ENCODE measurements at regions of chr5 and their contacts with region 1.

Region 1: GRCh38 chr5:140351609-140352334 is 5.4 kb upstream of the HBEGF start:
- DNase-seq: peak; percentile 70 to 81 (median 77)
- H3K4me3 ChIP-seq: no peak overlapping the region
- H3K4me3 Mint-ChIP-seq: peak overlapping the region in 3 of 8 donors; percentile 25 to 53 (median 49)
- H3K27ac ChIP-seq: no peak overlapping the region
- H3K27ac Mint-ChIP-seq: peak overlapping the region in 2 of 7 donors; percentile 19 to 61
- H3K4me1 ChIP-seq: peaks cover 11% of the 10 kb centered on the region
- H3K4me1 Mint-ChIP-seq: peaks cover 8 to 16% (median 11%) of the 10 kb centered on the region in 4 donors
- H3K27me3 ChIP-seq: no peaks in the 10 kb centered on the region
- H3K27me3 Mint-ChIP-seq: peaks cover 1 to 5% of the 10 kb centered on the region in 2 donors

Region 2: GRCh38 chr5:140244525-140245025 is 107.2 kb before region 1 on chr5:
- CTCF ChIA-PET with region 1: interaction called, 518 read pairs
- POLR2A ChIA-PET with region 1: interaction called, 4 read pairs
- intact Hi-C with region 1: loop called (anchors 1 kb)
- DNase-seq: peak; percentile 67 to 82 (median 78)
- H3K4me3 ChIP-seq: no peak overlapping the region
- H3K4me3 Mint-ChIP-seq: peak overlapping the region in 3 of 8 donors; percentile 36 to 57 (median 54)
- H3K27ac ChIP-seq: no peak overlapping the region
- H3K27ac Mint-ChIP-seq: peak overlapping the region in 6 of 7 donors; percentile 62 to 88 (median 68)
- H3K4me1 ChIP-seq: peaks cover 17% of the 10 kb centered on the region
- H3K4me1 Mint-ChIP-seq: peaks cover 12 to 23% (median 15%) of the 10 kb centered on the region in 4 donors
- H3K27me3 ChIP-seq: no peaks in the 10 kb centered on the region
- H3K27me3 Mint-ChIP-seq: no peaks in the 10 kb centered on the region

Region 3: GRCh38 chr5:140261403-140262171 is 90.2 kb before region 1 on chr5:
- CTCF ChIA-PET with region 1: interaction called, 22 read pairs
- POLR2A ChIA-PET with region 1: interaction called, 4 read pairs
- intact Hi-C with region 1: no loop called
- DNase-seq: peak; percentile 33 to 70 (median 51)
- H3K4me3 ChIP-seq: no peak overlapping the region
- H3K4me3 Mint-ChIP-seq: peak overlapping the region in 7 of 8 donors; percentile 28 to 74 (median 60)
- H3K27ac ChIP-seq: peak overlapping the region; percentile 38
- H3K27ac Mint-ChIP-seq: peak overlapping the region; percentile 78 to 97 (median 83)
- H3K4me1 ChIP-seq: peaks cover 70% of the 10 kb centered on the region
- H3K4me1 Mint-ChIP-seq: peaks cover 52 to 73% (median 58%) of the 10 kb centered on the region in 4 donors
- H3K27me3 ChIP-seq: no peaks in the 10 kb centered on the region
- H3K27me3 Mint-ChIP-seq: no peaks in the 10 kb centered on the region

Region 4: GRCh38 chr5:140327589-140327988 is 24.2 kb before region 1 on chr5:
- CTCF ChIA-PET with region 1: interaction called, 12 read pairs
- POLR2A ChIA-PET with region 1: no interaction called
- intact Hi-C with region 1: no loop called
- DNase-seq: no peak
- H3K4me3 ChIP-seq: no peak overlapping the region
- H3K4me3 Mint-ChIP-seq: no peak overlapping the region
- H3K27ac ChIP-seq: no peak overlapping the region
- H3K27ac Mint-ChIP-seq: no peak overlapping the region
- H3K4me1 ChIP-seq: no peaks in the 10 kb centered on the region
- H3K4me1 Mint-ChIP-seq: no peaks in the 10 kb centered on the region
- H3K27me3 ChIP-seq: no peaks in the 10 kb centered on the region
- H3K27me3 Mint-ChIP-seq: peaks cover 0 to 2% of the 10 kb centered on the region in 2 donors

Region 5: DNA sequence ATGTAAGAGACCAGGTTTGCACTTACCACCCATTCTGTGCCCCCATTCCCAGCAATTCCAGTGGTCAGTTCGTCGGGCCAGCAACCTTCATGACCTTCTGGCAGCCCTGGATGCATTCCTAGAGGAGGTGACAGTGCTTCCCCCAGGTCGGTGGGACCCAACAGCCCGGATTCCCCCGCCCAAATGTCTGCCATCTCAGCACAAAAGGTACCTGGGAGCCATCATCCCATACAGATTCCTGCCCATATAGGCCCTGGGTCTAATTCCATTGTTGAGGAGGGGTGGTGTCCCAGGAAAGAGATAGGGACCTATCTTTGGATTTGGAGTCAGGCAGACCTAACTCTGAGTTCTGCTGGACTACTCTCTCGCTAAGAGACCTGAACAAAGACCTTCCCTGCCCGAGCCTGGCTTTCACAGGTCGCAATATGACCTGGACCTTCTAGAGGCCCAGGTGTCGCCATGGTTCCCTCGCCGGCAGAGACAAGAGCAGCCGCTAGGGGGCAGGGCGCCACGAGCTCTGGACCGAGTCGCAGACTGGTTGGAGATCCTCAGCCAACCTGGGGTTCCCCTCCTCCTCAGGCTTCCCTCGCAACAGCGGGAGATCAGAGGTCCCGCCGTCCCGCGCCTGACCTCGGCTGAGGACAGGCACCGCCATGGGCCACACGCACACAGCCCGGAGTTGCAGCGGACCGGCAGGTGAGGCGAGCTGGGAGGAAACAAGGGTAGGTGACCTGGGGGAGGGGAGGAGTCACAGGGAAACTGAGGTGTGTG is 11.3 kb after region 1 on chr5:
- CTCF ChIA-PET with region 1: interaction called, 37 read pairs
- POLR2A ChIA-PET with region 1: interaction called, 3 read pairs
- intact Hi-C with region 1: no loop called
- DNase-seq: peak; percentile 74 to 79 (median 77)
- H3K4me3 ChIP-seq: peak overlapping the region in 1 of 2 donors; percentile 52
- H3K4me3 Mint-ChIP-seq: peak overlapping the region; percentile 71 to 84 (median 76)
- H3K27ac ChIP-seq: no peak overlapping the region
- H3K27ac Mint-ChIP-seq: peak overlapping the region in 5 of 7 donors; percentile 40 to 72 (median 59)
- H3K4me1 ChIP-seq: peaks cover 9% of the 10 kb centered on the region
- H3K4me1 Mint-ChIP-seq: peaks cover 3 to 12% (median 6%) of the 10 kb centered on the region in 4 donors
- H3K27me3 ChIP-seq: no peaks in the 10 kb centered on the region
- H3K27me3 Mint-ChIP-seq: peaks cover 0 to 2% of the 10 kb centered on the region in 2 donors

Region 6: GRCh38 chr5:140408750-140409256 is 57.0 kb after region 1 on chr5:
- CTCF ChIA-PET with region 1: no interaction called
- POLR2A ChIA-PET with region 1: no interaction called
- intact Hi-C with region 1: no loop called
- DNase-seq: no peak
- H3K4me3 ChIP-seq: no peak overlapping the region
- H3K4me3 Mint-ChIP-seq: peak overlapping the region in 5 of 8 donors; percentile 11 to 63 (median 32)
- H3K27ac ChIP-seq: no peak overlapping the region
- H3K27ac Mint-ChIP-seq: peak overlapping the region in 3 of 7 donors; percentile 8 to 27 (median 19)
- H3K4me1 ChIP-seq: peaks cover 73% of the 10 kb centered on the region
- H3K4me1 Mint-ChIP-seq: peaks cover 32 to 72% (median 52%) of the 10 kb centered on the region in 4 donors
- H3K27me3 ChIP-seq: no peaks in the 10 kb centered on the region
- H3K27me3 Mint-ChIP-seq: no peaks in the 10 kb centered on the region

Region 7: GRCh38 chr5:141968914-141969608 is 1617.3 kb after region 1 on chr5 and contains the start of gene RNF14:
- CTCF ChIA-PET with region 1: no interaction called
- POLR2A ChIA-PET with region 1: no interaction called
- intact Hi-C with region 1: no loop called
- DNase-seq: peak; percentile 92 to 94 (median 93)
- H3K4me3 ChIP-seq: peak within 1 kb of the TSS; percentile 66 to 85
- H3K4me3 Mint-ChIP-seq: peak within 1 kb of the TSS; percentile 87 to 98 (median 94)
- H3K27ac ChIP-seq: peak within 1 kb of the TSS; percentile 96
- H3K27ac Mint-ChIP-seq: peak within 1 kb of the TSS; percentile 97 to 99 (median 98)
- H3K4me1 ChIP-seq: peaks cover 23% of the 10 kb centered on the region
- H3K4me1 Mint-ChIP-seq: peaks cover 20 to 42% (median 30%) of the 10 kb centered on the region in 4 donors
- H3K27me3 ChIP-seq: no peaks in the 10 kb centered on the region
- H3K27me3 Mint-ChIP-seq: no peaks in the 10 kb centered on the region
- total RNA-seq, gene RNF14: 35.4 to 38.5 TPM